PC-3 (cell line): ENCODE measurements at regions of chr9 and their contacts with region 1.

Region 1: DNA sequence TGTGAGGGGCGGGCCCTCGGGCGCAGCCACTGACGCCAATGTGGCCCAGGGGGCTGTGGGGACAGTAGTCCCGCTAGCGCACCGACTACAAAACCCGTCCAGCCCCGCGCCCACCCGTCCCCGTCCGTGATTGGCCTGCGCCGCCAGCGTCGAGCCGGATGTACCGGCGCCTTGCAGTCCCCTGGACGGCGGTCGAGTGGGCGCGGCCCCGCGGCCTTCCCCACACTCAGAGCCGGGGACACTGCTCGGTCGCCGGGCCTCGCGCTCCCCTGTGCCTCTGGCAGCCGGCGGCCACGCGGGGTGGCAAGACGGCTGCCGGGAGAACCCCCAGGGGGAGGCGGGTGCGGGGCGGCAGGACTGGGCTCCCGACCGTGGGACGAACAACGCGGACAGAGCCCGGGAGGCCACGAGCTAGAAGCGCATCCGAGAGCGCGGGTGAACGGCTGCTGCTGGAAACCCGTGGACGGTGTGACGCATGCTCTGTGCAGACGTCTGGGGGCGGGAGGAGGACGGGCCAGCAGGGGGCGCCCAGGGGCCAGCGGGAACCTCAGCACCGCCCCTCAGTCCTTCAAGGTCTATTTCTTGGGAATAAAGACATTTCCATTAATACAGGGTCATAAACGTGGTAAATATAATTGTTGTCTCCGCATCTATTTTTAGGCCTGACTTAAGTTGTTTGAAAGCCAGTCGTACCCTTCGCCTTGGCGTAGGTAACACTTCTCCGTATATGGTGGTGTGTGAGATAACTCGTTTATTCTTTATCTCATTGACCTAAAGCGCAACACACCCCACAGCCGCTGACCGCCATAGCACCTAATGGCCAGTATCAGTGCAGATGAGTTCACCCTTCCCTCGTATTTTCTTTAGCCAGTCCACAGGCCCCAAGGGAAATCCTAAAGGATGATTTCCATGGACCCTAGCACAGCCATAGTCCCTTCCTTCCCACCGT is 629 bp upstream of the BICD2 start:
- DNase-seq: peak; percentile 94
- ATAC-seq: peak; percentile 92
- H3K4me3 ChIP-seq: peak overlapping the region; percentile 86
- H3K27ac ChIP-seq: peak overlapping the region; percentile 94
- H3K4me1 ChIP-seq: peaks cover 12% of the 10 kb centered on the region; the same call in 1 of the 2 replicates
- H3K27me3 ChIP-seq: no peaks in the 10 kb centered on the region
- CTCF ChIP-seq: peak; percentile 79

Region 2: DNA sequence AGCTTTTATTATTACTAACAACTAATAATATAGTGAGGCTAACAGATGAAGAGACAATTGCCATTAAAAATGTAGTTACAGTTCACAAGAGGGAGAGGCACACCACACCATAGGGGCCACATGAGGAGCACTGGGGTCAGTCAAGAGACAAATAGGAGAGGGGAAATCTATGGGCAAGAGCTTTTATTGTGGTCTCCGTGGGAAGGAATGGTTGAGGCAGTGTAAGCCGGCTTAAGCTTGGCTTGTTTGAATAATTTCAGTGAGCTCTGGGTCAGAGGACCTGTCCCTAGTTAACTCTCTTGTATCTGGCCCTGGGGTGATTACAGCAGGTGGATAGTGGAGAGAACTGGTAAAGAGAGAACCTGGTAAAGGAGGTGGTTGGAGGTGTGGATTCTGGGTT is 396.2 kb before region 1 on chr9:
- CTCF ChIA-PET with region 1: no interaction called
- POLR2A ChIA-PET with region 1: no interaction called
- intact Hi-C with region 1: no loop called
- DNase-seq: no peak
- ATAC-seq: no peak
- H3K4me3 ChIP-seq: no peak overlapping the region
- H3K27ac ChIP-seq: no peak overlapping the region
- H3K4me1 ChIP-seq: no peaks in the 10 kb centered on the region
- H3K27me3 ChIP-seq: no peaks in the 10 kb centered on the region
- CTCF ChIP-seq: no peak

Region 3: GRCh38 chr9:92488681-92489550 is 276.3 kb before region 1 on chr9:
- CTCF ChIA-PET with region 1: no interaction called
- POLR2A ChIA-PET with region 1: no interaction called
- intact Hi-C with region 1: no loop called
- DNase-seq: peak; percentile 22
- ATAC-seq: peak; percentile 49; the same call in 1 of the 2 replicates
- H3K4me3 ChIP-seq: no peak overlapping the region
- H3K27ac ChIP-seq: no peak overlapping the region
- H3K4me1 ChIP-seq: peaks cover 4% of the 10 kb centered on the region
- H3K27me3 ChIP-seq: no peaks in the 10 kb centered on the region
- CTCF ChIP-seq: no peak

Region 4: DNA sequence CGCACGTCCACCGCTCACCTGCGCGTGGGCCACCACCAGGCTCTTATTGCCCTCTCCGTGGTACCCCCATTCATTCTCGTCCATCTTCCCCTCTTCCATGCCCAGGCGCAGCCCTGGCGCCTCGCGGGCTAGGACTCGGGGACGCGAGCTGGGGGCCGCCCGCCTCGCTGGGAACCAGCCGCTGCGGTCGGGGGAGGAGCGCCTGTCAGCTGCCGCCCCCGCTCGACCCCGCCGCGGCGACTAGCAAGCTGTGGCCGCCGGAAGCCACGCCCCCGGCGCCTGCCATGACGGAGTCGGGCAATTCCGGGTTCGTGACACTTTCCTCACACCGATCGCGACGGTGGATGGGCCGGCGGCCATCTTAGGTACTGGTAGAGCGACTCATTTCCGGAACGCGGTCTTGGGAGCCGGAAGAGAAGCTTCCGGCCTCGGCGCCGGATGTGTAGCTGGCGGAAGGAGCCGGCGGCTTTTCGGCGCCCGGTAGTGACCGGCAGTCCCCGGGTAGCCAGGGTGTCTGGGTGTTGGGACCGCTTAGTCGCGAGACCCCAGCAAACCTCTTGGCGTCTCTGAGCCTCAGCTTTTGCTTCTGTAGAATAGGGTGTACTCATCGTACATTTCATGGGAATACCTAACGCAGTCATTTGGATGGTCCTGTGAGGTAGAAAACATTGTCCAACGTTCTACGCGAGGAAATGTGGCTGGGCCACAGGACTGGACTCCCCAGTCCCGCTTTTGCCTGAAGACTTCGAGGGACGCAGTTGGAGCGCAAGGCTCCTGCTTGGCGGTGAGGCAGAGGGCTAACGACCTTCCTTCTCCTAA is 95.2 kb before region 1 on chr9 and contains the start of gene IPPK:
- CTCF ChIA-PET with region 1: interaction called, 3 read pairs
- POLR2A ChIA-PET with region 1: interaction called, 5 read pairs
- intact Hi-C with region 1: loop called (anchors 2 kb)
- DNase-seq: peak; percentile 97
- ATAC-seq: peak; percentile 86
- H3K4me3 ChIP-seq: peak within 1 kb of the TSS; percentile 95
- H3K27ac ChIP-seq: peak within 1 kb of the TSS; percentile 73
- H3K4me1 ChIP-seq: peaks cover 17% of the 10 kb centered on the region
- H3K27me3 ChIP-seq: no peaks in the 10 kb centered on the region
- CTCF ChIP-seq: no peak
- total RNA-seq, gene IPPK: 10.6 and 13.2 TPM in 2 replicates

Region 5: GRCh38 chr9:92790542-92791527 is 25.6 kb after region 1 on chr9:
- CTCF ChIA-PET with region 1: interaction called, 6 read pairs
- POLR2A ChIA-PET with region 1: no interaction called
- intact Hi-C with region 1: loop called (anchors 1 kb)
- DNase-seq: peak; percentile 86
- ATAC-seq: peak; percentile 96
- H3K4me3 ChIP-seq: peak overlapping the region; percentile 32
- H3K27ac ChIP-seq: no peak overlapping the region
- H3K4me1 ChIP-seq: no peaks in the 10 kb centered on the region
- H3K27me3 ChIP-seq: no peaks in the 10 kb centered on the region
- CTCF ChIP-seq: peak; percentile 81

Region 6: DNA sequence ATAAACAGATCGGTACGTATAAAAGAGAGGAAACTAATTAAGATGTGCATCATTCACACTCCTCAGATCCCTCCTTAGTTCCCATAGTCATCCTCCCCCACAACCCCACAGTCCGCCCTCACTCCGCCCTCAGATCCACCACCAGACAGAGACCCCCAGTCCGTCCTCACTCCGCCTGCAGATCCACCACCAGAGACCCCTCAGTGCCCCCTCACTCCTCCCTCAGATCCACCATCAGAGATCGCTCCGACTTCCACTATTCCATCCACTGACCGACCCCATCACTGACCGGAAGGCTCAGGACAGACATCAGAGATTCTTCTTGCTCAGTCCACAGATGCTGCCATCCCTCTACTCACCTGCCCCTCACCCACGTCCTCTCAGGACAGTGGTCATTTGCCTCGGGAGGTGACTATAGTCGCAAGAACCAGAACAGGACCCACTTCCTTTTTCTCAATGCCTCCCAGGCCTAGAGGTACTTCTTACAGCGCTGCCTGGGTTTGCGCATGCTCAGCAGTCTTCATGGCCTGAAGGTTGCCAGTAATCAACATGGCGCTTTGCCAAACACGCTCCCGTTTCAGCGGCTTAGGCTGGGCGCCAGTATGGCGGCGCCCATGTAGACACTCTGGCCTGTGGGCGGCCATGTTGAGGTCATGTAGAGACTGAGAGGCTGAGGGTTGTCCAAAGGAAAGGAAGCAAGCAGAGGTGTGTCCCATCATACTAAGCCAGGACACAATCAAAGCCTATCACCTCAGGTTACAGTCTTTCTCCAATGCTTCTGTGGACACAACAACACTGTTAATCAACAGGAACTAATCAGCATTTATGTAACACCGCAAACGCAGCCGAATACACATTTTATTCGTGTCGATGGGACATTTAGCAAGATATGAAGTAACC is 112.5 kb after region 1 on chr9 and contains the start of gene ZNF484:
- CTCF ChIA-PET with region 1: no interaction called
- POLR2A ChIA-PET with region 1: no interaction called
- intact Hi-C with region 1: no loop called
- DNase-seq: peak; percentile 98
- ATAC-seq: peak; percentile 99
- H3K4me3 ChIP-seq: peak within 1 kb of the TSS; percentile 96
- H3K27ac ChIP-seq: 0 out of 2 replicates have a peak within 1 kb of the TSS, but pooled peaks have one; percentile 24
- H3K4me1 ChIP-seq: peaks cover 12% of the 10 kb centered on the region; the same call in 1 of the 2 replicates
- H3K27me3 ChIP-seq: no peaks in the 10 kb centered on the region
- CTCF ChIP-seq: no peak
- total RNA-seq, gene ZNF484: 3.8 and 3.9 TPM in 2 replicates